ENCODE measurements at regions of chrX and their contacts with region 1.

Region 1: GRCh38 chrX:39427906-39428305 is 626.6 kb downstream of the MID1IP1 start:
- DNase-seq: peak; percentile 71
- H3K4me3 Mint-ChIP-seq: no peak overlapping the region
- H3K27ac Mint-ChIP-seq: peak overlapping the region; percentile 88
- H3K4me1 Mint-ChIP-seq: peaks cover 67% of the 10 kb centered on the region
- H3K27me3 Mint-ChIP-seq: no peaks in the 10 kb centered on the region

Region 2: GRCh38 chrX:39196192-39197102 is 231.5 kb before region 1 on chrX:
- CTCF ChIA-PET with region 1: no interaction called
- intact Hi-C with region 1: loop called (anchors 2 kb)
- DNase-seq: peak; percentile 73
- H3K4me3 Mint-ChIP-seq: peak overlapping the region; percentile 49
- H3K27ac Mint-ChIP-seq: peak overlapping the region; percentile 80
- H3K4me1 Mint-ChIP-seq: peaks cover 46% of the 10 kb centered on the region
- H3K27me3 Mint-ChIP-seq: no peaks in the 10 kb centered on the region

Region 3: DNA sequence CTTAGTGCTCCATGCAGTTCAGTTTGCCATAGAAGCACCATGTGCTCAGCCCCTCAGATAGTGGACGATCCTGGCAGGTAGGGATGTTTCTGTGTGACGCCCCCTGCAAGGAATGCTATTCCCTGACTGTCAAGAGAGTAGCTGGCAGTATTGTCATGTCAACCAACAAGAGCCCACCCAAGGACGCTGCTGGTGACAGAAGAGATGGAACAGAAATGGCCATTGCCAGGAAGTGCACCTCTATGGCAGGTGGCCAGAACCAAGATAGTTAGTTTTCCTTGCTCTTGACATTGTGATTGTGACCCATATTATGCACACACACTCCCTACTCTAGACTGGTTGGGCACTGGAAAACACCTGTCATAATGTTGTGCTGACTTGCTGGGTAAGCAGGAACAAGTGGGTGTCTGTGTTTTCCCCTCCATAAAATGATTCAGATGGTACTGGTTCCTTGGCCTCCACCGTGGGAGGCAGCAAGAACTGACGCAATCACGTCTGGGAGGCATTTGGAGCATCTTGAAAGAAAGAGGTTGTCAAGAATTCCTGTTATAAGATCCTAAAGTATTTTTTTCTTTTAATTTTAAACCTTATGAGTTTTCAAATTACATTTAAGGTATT is 118.8 kb before region 1 on chrX:
- CTCF ChIA-PET with region 1: interaction called, 3 read pairs
- intact Hi-C with region 1: loop called (anchors 5 kb)
- DNase-seq: peak; percentile 75
- H3K4me3 Mint-ChIP-seq: no peak overlapping the region
- H3K27ac Mint-ChIP-seq: peak overlapping the region; percentile 100
- H3K4me1 Mint-ChIP-seq: peaks cover 79% of the 10 kb centered on the region
- H3K27me3 Mint-ChIP-seq: no peaks in the 10 kb centered on the region

Region 4: GRCh38 chrX:39398963-39399261 is 29.0 kb before region 1 on chrX:
- CTCF ChIA-PET with region 1: no interaction called
- intact Hi-C with region 1: loop called (anchors 2 kb)
- DNase-seq: no peak
- H3K4me3 Mint-ChIP-seq: no peak overlapping the region
- H3K27ac Mint-ChIP-seq: no peak overlapping the region
- H3K4me1 Mint-ChIP-seq: peaks cover 24% of the 10 kb centered on the region
- H3K27me3 Mint-ChIP-seq: no peaks in the 10 kb centered on the region

Region 5: GRCh38 chrX:39578354-39578869 is 150.5 kb after region 1 on chrX:
- CTCF ChIA-PET with region 1: no interaction called
- intact Hi-C with region 1: loop called (anchors 5 kb)
- DNase-seq: peak; percentile 84
- H3K4me3 Mint-ChIP-seq: peak overlapping the region; percentile 29
- H3K27ac Mint-ChIP-seq: peak overlapping the region; percentile 89
- H3K4me1 Mint-ChIP-seq: peaks cover 23% of the 10 kb centered on the region
- H3K27me3 Mint-ChIP-seq: no peaks in the 10 kb centered on the region